Activated naive CD8-positive, alpha-beta T cell treated with anti-CD3 and anti-CD28 coated beads, Interleukin-2, amount 10 ng/mL, durations not matched to agents 7 days and 5 days (primary cell): ENCODE measurements at regions of chr19 and their contacts with region 1.

Region 1: GRCh38 chr19:39970675-39971379 is at the start of gene PSMC4:
- DNase-seq: peak; percentile 98
- ATAC-seq: peak; percentile 99
- H3K4me3 Mint-ChIP-seq: peak within 1 kb of the TSS; percentile 91
- H3K27ac Mint-ChIP-seq: peak within 1 kb of the TSS; percentile 98
- H3K4me1 Mint-ChIP-seq: peaks cover 36% of the 10 kb centered on the region
- H3K27me3 Mint-ChIP-seq: no peaks in the 10 kb centered on the region
- total RNA-seq, gene PSMC4: 81.9 to 84.5 TPM

Region 2: GRCh38 chr19:39846176-39846677 is 124.6 kb before region 1 on chr19 and contains the start of gene FBL:
- POLR2A ChIA-PET with region 1: interaction called, 36 read pairs
- DNase-seq: peak; percentile 100
- ATAC-seq: peak; percentile 96
- H3K4me3 Mint-ChIP-seq: peak within 1 kb of the TSS; percentile 91
- H3K27ac Mint-ChIP-seq: peak within 1 kb of the TSS; percentile 92
- H3K4me1 Mint-ChIP-seq: peaks cover 38% of the 10 kb centered on the region
- H3K27me3 Mint-ChIP-seq: peaks cover 2% of the 10 kb centered on the region
- total RNA-seq, gene FBL: 344 to 357 TPM

Region 3: GRCh38 chr19:39941615-39942365 is 29.0 kb before region 1 on chr19:
- POLR2A ChIA-PET with region 1: interaction called, 80 read pairs
- DNase-seq: no peak
- ATAC-seq: peak; percentile 68
- H3K4me3 Mint-ChIP-seq: peak overlapping the region; percentile 76
- H3K27ac Mint-ChIP-seq: peak overlapping the region; percentile 86
- H3K4me1 Mint-ChIP-seq: peaks cover 53% of the 10 kb centered on the region
- H3K27me3 Mint-ChIP-seq: no peaks in the 10 kb centered on the region

Region 4: DNA sequence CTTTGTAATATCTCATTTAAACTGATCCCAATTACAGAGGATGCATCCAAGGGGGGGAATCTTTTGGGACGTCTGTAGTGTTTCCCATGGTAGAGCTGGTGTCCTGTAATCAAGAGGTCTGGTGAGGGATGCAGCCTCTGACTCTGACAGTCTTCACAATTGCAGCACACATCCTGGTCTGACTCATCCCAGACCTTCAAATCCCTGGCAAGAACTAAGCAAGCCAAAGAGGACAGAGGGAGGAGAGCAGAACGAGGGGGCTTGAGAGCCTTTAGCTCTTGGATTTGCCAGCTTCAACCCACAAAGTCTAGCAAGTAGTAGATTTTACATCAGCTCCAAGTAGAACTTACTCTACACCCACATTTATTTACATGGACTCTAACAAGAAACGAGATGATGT is 19.1 kb before region 1 on chr19:
- POLR2A ChIA-PET with region 1: interaction called, 59 read pairs
- DNase-seq: no peak
- ATAC-seq: no peak
- H3K4me3 Mint-ChIP-seq: peak overlapping the region; percentile 71
- H3K27ac Mint-ChIP-seq: peak overlapping the region; percentile 98
- H3K4me1 Mint-ChIP-seq: peaks cover 47% of the 10 kb centered on the region
- H3K27me3 Mint-ChIP-seq: no peaks in the 10 kb centered on the region

Region 5: GRCh38 chr19:39996811-39997594 is 26.2 kb after region 1 on chr19 and contains the start of gene ZNF546:
- POLR2A ChIA-PET with region 1: interaction called, 23 read pairs
- DNase-seq: peak; percentile 90
- ATAC-seq: peak; percentile 90
- H3K4me3 Mint-ChIP-seq: peak within 1 kb of the TSS; percentile 98
- H3K27ac Mint-ChIP-seq: peak within 1 kb of the TSS; percentile 95
- H3K4me1 Mint-ChIP-seq: peaks cover 30% of the 10 kb centered on the region
- H3K27me3 Mint-ChIP-seq: no peaks in the 10 kb centered on the region
- total RNA-seq, gene ZNF546: 9.3 to 9.9 TPM

Region 6: DNA sequence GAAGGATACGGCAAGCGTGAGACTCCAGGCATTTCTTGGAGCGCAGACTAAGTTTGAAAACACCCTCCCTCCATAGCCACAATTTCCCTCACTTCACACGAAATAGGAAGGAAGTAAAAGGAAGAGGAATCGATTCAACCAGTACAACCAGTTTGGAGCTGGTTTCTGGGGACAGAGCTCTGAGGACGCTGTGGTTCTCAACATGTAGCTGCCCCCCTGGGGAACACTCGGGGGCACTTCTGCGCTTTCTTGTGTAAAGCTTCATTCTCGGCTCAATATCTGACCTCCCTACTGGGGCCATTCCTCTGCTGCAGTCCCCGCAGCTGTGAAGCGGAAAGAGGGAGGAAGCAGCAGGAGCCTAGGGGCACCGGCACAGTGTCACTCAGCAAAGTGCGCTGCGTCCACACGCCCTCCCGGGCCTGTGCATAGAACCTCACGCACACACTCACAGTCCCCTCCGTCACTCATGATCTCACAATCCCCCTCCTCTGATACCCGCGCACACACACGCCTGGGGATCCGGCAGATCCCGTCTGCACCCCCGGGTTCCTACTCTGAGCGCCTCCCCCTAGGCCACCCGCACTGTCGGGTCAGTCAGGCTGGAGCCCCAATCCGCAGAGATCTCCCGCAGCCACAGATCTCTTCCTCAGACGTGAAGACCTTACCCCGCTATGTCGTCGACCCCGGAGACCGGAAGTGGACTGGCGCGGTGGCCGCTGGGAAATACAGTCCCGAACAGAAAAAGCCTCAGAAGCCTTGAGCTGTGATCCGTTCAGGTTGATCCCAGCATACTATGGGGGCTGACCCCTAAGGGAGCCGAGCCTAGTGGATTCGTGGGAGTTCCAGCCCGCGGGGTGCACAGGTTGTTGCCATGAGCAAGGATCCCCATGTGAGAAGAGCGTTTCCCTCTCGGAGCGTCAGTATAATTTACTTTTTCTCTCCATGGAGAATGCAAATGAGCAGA is 119.7 kb after region 1 on chr19 and contains the start of gene ZNF780A:
- POLR2A ChIA-PET with region 1: interaction called, 11 read pairs
- DNase-seq: peak; percentile 82
- ATAC-seq: peak; percentile 90
- H3K4me3 Mint-ChIP-seq: peak within 1 kb of the TSS; percentile 99
- H3K27ac Mint-ChIP-seq: peak within 1 kb of the TSS; percentile 100
- H3K4me1 Mint-ChIP-seq: peaks cover 25% of the 10 kb centered on the region
- H3K27me3 Mint-ChIP-seq: peaks cover 13% of the 10 kb centered on the region
- total RNA-seq, gene ZNF780A: 30.2 to 32.2 TPM